A673 (cell line): ENCODE measurements at regions of chr9 and their contacts with region 1.

Region 1: DNA sequence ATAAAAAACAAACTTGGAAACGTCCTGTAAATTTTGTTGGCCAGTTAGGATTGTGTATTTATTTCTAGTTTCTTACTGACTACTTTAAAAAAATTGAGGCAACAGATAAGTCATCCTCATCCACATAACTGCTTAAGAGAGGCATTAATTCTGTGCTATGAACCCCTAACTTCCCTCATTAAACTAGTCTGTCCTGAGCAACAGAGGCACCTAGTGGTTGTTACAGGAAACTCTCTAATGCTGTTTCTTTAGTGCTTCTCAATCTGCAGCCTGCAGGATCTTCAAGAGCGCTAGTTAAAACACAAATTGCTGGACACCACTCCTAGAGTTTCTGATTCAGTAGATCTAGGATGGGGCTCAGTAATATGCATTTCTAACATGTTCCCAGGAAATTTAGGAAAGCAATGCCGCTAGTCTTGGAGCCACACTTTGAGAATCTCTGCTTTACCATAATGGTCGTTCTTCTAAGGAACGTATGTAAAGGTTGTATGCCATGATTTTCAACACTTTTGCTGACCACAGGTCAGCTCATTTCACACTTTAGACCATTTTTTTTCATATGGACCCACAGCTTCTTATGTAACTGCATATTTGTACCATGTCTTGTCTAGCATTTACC is 410.1 kb upstream of the SMARCA2 start:
- DNase-seq: peak; percentile 54
- H3K4me3 ChIP-seq: no peak overlapping the region
- H3K27ac ChIP-seq: no peak overlapping the region
- H3K4me1 ChIP-seq: no peaks in the 10 kb centered on the region
- H3K27me3 ChIP-seq: peaks cover under 1% of the 10 kb centered on the region
- CTCF ChIP-seq: peak; percentile 69

Region 2: DNA sequence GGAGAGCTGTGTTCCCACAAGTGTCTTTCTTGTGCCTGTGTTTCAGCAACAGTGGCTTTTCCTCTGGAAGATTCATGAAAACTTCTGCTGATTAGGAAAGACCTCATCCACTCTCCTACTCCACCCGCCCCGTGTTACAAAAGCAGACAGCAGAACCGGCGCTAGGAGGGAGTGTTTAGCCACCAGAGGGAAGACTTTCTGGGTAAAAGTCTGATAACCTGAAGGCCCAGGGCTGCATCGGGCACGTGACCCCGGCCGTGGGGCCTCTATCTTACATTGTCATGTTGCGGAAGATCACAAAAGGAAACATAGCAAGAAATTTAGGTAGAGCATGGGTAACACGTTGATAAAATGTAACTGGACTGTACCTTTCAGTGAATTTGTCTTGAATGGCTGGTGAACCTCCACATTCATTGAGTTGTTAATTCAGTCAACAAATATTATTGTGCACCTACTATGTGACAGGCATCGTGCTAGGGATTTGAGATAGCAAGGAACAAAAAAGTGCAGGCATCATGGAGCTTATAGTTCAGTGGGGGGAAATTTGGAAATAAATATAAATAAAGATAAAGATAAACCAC is 586.8 kb before region 1 on chr9:
- CTCF ChIA-PET with region 1: no interaction called
- POLR2A ChIA-PET with region 1: no interaction called
- intact Hi-C with region 1: loop called (anchors 5 kb)
- DNase-seq: peak; percentile 18
- H3K4me3 ChIP-seq: no peak overlapping the region
- H3K27ac ChIP-seq: no peak overlapping the region
- H3K4me1 ChIP-seq: no peaks in the 10 kb centered on the region
- H3K27me3 ChIP-seq: peaks cover 39% of the 10 kb centered on the region
- CTCF ChIP-seq: peak; percentile 40; the same call in 1 of the 2 replicates

Region 3: GRCh38 chr9:1332156-1332555 is 272.9 kb before region 1 on chr9:
- CTCF ChIA-PET with region 1: no interaction called
- POLR2A ChIA-PET with region 1: no interaction called
- intact Hi-C with region 1: no loop called
- DNase-seq: peak; percentile 1
- H3K4me3 ChIP-seq: no peak overlapping the region
- H3K27ac ChIP-seq: no peak overlapping the region
- H3K4me1 ChIP-seq: no peaks in the 10 kb centered on the region
- H3K27me3 ChIP-seq: no peaks in the 10 kb centered on the region
- CTCF ChIP-seq: no peak

Region 4: DNA sequence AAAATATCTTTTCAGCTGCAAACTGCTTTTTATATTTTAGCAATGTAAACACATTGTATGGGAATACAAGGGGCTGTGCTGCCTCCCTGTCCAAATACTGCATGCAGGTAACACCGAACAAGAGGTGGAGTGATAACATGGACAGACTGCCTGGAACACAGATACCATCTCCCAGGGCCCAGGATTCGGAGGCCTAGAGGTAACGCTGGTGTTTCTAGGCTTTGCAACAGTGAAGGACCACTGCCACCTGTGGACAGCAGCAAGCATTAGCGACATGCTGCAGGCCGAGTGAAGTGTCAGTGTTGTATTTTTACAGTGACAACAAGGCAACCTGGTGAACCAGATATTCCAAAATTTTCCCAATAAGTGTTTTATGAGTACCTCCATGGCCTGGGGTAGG is 175.8 kb before region 1 on chr9:
- CTCF ChIA-PET with region 1: no interaction called
- POLR2A ChIA-PET with region 1: no interaction called
- intact Hi-C with region 1: no loop called
- DNase-seq: no peak
- H3K4me3 ChIP-seq: no peak overlapping the region
- H3K27ac ChIP-seq: no peak overlapping the region
- H3K4me1 ChIP-seq: peaks cover 8% of the 10 kb centered on the region
- H3K27me3 ChIP-seq: peaks cover 15% of the 10 kb centered on the region
- CTCF ChIP-seq: 0 out of 2 replicates have a peak, but pooled peaks have one; percentile 26